CD8-positive, alpha-beta memory T cell (primary cell): ENCODE measurements at regions of chr5 and their contacts with region 1.

Region 1: GRCh38 chr5:159660401-159660800 is 255.9 kb upstream of the ADRA1B start:
- DNase-seq: no peak
- H3K4me3 ChIP-seq: no peak overlapping the region
- H3K4me3 Mint-ChIP-seq: no peak overlapping the region
- H3K27ac ChIP-seq: no peak overlapping the region
- H3K27ac Mint-ChIP-seq: no peak overlapping the region
- H3K4me1 ChIP-seq: no peaks in the 10 kb centered on the region
- H3K4me1 Mint-ChIP-seq: no peaks in the 10 kb centered on the region
- H3K27me3 ChIP-seq: no peaks in the 10 kb centered on the region
- H3K27me3 Mint-ChIP-seq: peaks cover 0 to 3% of the 10 kb centered on the region in 2 donors

Region 2: GRCh38 chr5:159631001-159631400 is 29.4 kb before region 1 on chr5:
- CTCF ChIA-PET with region 1: no interaction called
- POLR2A ChIA-PET with region 1: interaction called, 12 read pairs
- DNase-seq: no peak
- H3K4me3 ChIP-seq: no peak overlapping the region
- H3K4me3 Mint-ChIP-seq: no peak overlapping the region
- H3K27ac ChIP-seq: no peak overlapping the region
- H3K27ac Mint-ChIP-seq: no peak overlapping the region
- H3K4me1 ChIP-seq: no peaks in the 10 kb centered on the region
- H3K4me1 Mint-ChIP-seq: no peaks in the 10 kb centered on the region
- H3K27me3 ChIP-seq: no peaks in the 10 kb centered on the region
- H3K27me3 Mint-ChIP-seq: peaks cover 6 to 28% of the 10 kb centered on the region in 2 donors